Heart right ventricle (tissue), 16 donors: ENCODE measurements at regions of chr17 and their contacts with region 1.

Region 1: GRCh38 chr17:43562679-43563599 is 16.8 kb upstream of the ETV4 start:
- DNase-seq: no peak
- ATAC-seq: peak in 5 of 8 donors; percentile 16 to 53 (median 41)
- H3K4me3 ChIP-seq: no peak overlapping the region
- H3K27ac ChIP-seq: no peak overlapping the region
- H3K4me1 ChIP-seq: peaks cover 0 to 27% (median 12%) of the 10 kb centered on the region in 9 donors
- H3K27me3 ChIP-seq: peaks cover 0 to 30% (median 4%) of the 10 kb centered on the region in 7 donors
- CTCF ChIP-seq: no peak

Region 2: GRCh38 chr17:43517615-43518386 is 45.1 kb before region 1 on chr17:
- intact Hi-C with region 1: loop called in 3 of 10 experiments (anchors 5 kb)
- DNase-seq: no peak
- ATAC-seq: peak in 7 of 8 donors; percentile 48 to 77 (median 52)
- H3K4me3 ChIP-seq: no peak overlapping the region
- H3K27ac ChIP-seq: peak overlapping the region in 8 of 10 donors; percentile 47 to 74 (median 54)
- H3K4me1 ChIP-seq: peaks cover 3 to 37% (median 28%) of the 10 kb centered on the region in 9 donors
- H3K27me3 ChIP-seq: no peaks in the 10 kb centered on the region
- CTCF ChIP-seq: no peak

Region 3: GRCh38 chr17:43524945-43525575 is 37.9 kb before region 1 on chr17:
- intact Hi-C with region 1: loop called in 2 of 10 experiments (anchors 5 kb)
- DNase-seq: no peak
- ATAC-seq: no peak
- H3K4me3 ChIP-seq: no peak overlapping the region
- H3K27ac ChIP-seq: peak overlapping the region in 4 of 10 donors; percentile 20 to 53 (median 36)
- H3K4me1 ChIP-seq: peaks cover 0 to 30% (median 27%) of the 10 kb centered on the region in 9 donors
- H3K27me3 ChIP-seq: no peaks in the 10 kb centered on the region
- CTCF ChIP-seq: no peak

Region 4: GRCh38 chr17:43661699-43662412 is 98.9 kb after region 1 on chr17 and contains the start of gene MEOX1:
- intact Hi-C with region 1: no loop called
- DNase-seq: peak in 1 of 2 donors; percentile 56
- ATAC-seq: peak in 7 of 8 donors; percentile 40 to 71 (median 48)
- H3K4me3 ChIP-seq: peak within 1 kb of the TSS; percentile 14 to 76 (median 52)
- H3K27ac ChIP-seq: peak within 1 kb of the TSS; percentile 30 to 98 (median 85)
- H3K4me1 ChIP-seq: peaks cover 16 to 89% (median 50%) of the 10 kb centered on the region in 9 donors
- H3K27me3 ChIP-seq: no peaks in the 10 kb centered on the region
- CTCF ChIP-seq: no peak
- total RNA-seq, gene MEOX1: 6.4 to 20.7 (median 12.3) TPM

Region 5: GRCh38 chr17:43760254-43760852 is 197.4 kb after region 1 on chr17:
- intact Hi-C with region 1: loop called in 1 of 10 experiments (anchors 10 kb)
- DNase-seq: peak; percentile 92 to 95
- ATAC-seq: peak; percentile 85 to 95 (median 92)
- H3K4me3 ChIP-seq: no peak overlapping the region
- H3K27ac ChIP-seq: no peak overlapping the region
- H3K4me1 ChIP-seq: peaks cover 2 to 20% (median 5%) of the 10 kb centered on the region in 9 donors
- H3K27me3 ChIP-seq: peaks cover 0 to 28% (median 25%) of the 10 kb centered on the region in 7 donors
- CTCF ChIP-seq: peak; percentile 97 to 100 (median 99)